Activated CD4-positive, alpha-beta T cell treated with anti-CD3 and anti-CD28 coated beads for 36 hours (primary cell): ENCODE measurements at regions of chr19 and their contacts with region 1.

Region 1: DNA sequence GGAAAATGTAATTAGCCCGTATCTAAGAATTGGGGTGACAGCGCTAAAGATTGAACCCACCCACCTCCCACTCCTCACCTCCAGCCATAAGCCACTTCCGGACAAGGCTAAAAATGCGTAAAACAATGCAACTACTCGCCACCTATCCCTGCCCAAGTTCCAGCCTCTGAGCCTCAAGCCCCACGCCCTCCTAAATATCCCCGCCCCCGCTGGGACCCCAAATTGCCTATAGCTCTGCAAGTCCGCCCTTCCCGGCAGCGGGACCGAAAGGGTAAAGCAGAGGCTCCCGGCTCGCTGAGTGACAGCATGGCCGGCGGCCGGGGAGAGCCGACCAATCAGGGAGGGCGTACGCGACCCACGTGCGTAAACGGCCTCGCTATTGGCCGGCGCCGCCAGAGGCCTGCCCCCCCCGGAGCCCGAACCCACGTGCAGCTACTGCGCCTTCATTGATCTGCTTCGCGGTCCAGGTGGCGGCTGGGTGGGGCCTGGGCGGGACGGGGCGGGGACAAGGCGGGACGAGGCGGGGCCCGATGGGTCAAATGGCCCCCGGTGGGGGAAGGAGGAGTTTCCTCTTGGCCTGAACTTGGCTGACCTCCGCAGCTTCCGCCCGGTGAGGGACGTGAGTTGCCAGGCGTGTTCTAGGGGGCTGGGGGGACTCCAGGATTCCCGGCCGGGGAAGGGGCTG is at the start of gene TLE6:
- DNase-seq: peak; percentile 98
- ATAC-seq: peak; percentile 100
- H3K4me3 Mint-ChIP-seq: peak within 1 kb of the TSS; percentile 77
- H3K27ac Mint-ChIP-seq: peak within 1 kb of the TSS; percentile 63
- H3K4me1 Mint-ChIP-seq: peaks cover 14% of the 10 kb centered on the region
- H3K27me3 Mint-ChIP-seq: peaks cover 4% of the 10 kb centered on the region
- total RNA-seq, gene TLE6: 2.6 to 3.5 TPM

Region 2: GRCh38 chr19:2900296-2901252 is 76.6 kb before region 1 on chr19 and contains the start of gene ZNF57:
- CTCF ChIA-PET with region 1: no interaction called
- POLR2A ChIA-PET with region 1: no interaction called
- intact Hi-C with region 1: loop called in 1 of 2 experiments (anchors 1 kb)
- DNase-seq: peak; percentile 100
- ATAC-seq: peak; percentile 99
- H3K4me3 Mint-ChIP-seq: peak within 1 kb of the TSS; percentile 98
- H3K27ac Mint-ChIP-seq: peak within 1 kb of the TSS; percentile 96
- H3K4me1 Mint-ChIP-seq: peaks cover 18% of the 10 kb centered on the region
- H3K27me3 Mint-ChIP-seq: no peaks in the 10 kb centered on the region
- total RNA-seq, gene ZNF57: 5.9 to 7.1 TPM

Region 3: GRCh38 chr19:2944775-2945574 is 32.2 kb before region 1 on chr19 and contains the start of gene ZNF77:
- CTCF ChIA-PET with region 1: no interaction called
- POLR2A ChIA-PET with region 1: no interaction called
- intact Hi-C with region 1: loop called in 1 of 2 experiments (anchors 1 kb)
- DNase-seq: peak; percentile 99
- ATAC-seq: peak; percentile 100
- H3K4me3 Mint-ChIP-seq: peak within 1 kb of the TSS; percentile 83
- H3K27ac Mint-ChIP-seq: peak within 1 kb of the TSS; percentile 97
- H3K4me1 Mint-ChIP-seq: peaks cover 34% of the 10 kb centered on the region
- H3K27me3 Mint-ChIP-seq: no peaks in the 10 kb centered on the region
- total RNA-seq, gene ZNF77: 4.3 to 4.8 TPM

Region 4: DNA sequence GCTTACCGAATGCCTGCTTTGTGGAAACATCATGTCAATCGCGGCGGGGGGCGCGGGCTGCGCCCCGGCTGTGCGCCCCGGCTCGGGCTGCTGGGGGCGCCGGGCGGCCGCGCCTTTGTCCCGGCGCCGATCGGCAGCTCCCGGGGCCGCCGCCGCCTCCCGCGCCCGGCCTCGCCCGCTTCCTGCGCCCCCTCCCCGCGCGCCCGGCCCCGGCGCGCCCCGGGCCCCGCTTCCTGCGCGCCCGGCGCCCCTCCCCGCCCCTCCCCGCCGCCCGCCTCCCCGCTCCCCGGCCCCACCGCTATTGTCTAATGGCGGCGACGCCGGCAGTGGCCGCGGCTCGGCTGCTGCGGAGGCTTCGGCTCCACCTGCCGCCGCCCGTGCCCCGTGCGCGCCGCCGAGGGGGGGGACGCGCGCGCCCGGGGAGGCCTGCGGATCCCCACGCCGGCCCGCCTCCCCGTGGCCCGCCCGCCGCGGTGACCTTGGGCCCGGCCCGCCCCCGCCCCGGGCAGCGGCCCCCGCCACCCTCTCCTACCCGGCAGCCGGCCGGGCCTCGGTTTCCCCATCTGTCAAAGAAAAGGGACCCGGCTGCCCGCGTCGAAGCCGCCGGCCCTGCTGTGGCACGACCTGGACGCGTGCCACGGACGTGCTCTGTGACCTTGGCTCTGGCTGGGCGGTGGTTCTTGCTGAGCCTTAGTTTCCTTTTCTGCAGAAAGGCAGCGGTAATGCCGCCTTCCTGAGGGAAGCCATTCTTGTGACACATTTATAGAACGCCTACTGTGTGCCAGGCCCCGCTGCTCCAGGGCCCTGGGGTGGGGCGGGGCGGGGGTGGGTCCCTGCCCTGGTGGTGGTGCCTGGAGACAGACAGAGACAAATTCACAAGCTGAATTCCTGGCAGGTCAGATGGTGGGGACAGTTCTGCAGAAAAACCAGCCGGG is 85.3 kb after region 1 on chr19 and contains the start of gene TLE5:
- CTCF ChIA-PET with region 1: interaction called, 3 read pairs
- POLR2A ChIA-PET with region 1: no interaction called
- intact Hi-C with region 1: loop called in 1 of 2 experiments (anchors 2 kb)
- DNase-seq: peak; percentile 83
- ATAC-seq: peak; percentile 71
- H3K4me3 Mint-ChIP-seq: peak within 1 kb of the TSS; percentile 82
- H3K27ac Mint-ChIP-seq: peak within 1 kb of the TSS; percentile 97
- H3K4me1 Mint-ChIP-seq: peaks cover 35% of the 10 kb centered on the region
- H3K27me3 Mint-ChIP-seq: no peaks in the 10 kb centered on the region
- total RNA-seq, gene TLE5: 349 to 533 TPM